ENCODE measurements at regions of chr6 and their contacts with region 1.

Region 1: GRCh38 chr6:77466055-77466450 is 2.8 kb upstream of the HTR1B start:
- DNase-seq: peak; percentile 66 to 84
- ATAC-seq: peak; percentile 76
- H3K4me3 ChIP-seq: peak overlapping the region; percentile 78 to 95
- H3K27ac ChIP-seq: peak overlapping the region; percentile 11 to 90
- H3K4me1 ChIP-seq: no peaks in the 10 kb centered on the region
- H3K27me3 ChIP-seq: no peaks in the 10 kb centered on the region

Region 2: DNA sequence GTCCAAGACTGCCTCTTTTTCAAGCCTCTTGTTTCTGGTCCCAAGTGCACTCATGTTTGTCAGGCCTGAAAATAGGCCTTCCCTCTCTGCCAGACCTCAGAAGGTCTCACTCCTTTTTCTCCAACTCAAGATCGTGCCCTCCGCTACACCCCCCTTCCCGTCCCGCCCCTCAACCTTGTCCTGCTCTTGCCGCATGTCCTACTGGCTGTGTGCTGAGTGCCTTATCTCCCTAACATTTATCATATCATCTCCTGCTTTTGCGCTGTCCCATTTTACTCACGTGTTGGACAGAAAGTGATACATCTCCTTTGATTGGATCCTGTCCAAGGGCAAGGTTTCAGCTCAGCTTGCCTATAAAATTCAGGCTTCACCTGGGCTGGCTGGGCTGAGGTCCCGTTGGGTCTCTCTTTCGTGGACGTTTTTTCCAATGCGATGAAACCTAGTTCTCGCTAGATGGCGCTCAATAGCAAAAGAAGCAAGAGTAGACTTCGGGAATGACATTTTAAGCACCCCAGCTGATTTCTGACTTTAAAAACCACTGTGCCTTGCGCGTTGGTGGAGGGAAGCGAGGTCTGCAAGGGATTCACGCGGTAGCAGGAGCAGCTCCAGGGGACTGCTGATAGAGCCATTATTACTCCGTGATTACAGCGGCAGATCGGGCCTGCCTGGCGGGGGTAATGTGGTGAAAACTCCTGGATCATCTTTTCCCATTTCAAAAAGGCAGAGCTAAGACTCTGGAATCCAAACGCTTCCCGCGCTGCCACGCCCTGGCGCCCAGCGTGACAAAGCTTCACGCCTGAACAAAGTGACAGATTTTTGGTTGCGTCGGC is 1531.2 kb before region 1 on chr6:
- intact Hi-C with region 1: loop called in 1 of 2 experiments (anchors 10 kb)
- DNase-seq: no peak
- ATAC-seq: peak; percentile 74
- H3K4me3 ChIP-seq: peak overlapping the region in 1 of 2 donors; percentile 19
- H3K27ac ChIP-seq: no peak overlapping the region
- H3K4me1 ChIP-seq: no peaks in the 10 kb centered on the region
- H3K27me3 ChIP-seq: no peaks in the 10 kb centered on the region

Region 3: DNA sequence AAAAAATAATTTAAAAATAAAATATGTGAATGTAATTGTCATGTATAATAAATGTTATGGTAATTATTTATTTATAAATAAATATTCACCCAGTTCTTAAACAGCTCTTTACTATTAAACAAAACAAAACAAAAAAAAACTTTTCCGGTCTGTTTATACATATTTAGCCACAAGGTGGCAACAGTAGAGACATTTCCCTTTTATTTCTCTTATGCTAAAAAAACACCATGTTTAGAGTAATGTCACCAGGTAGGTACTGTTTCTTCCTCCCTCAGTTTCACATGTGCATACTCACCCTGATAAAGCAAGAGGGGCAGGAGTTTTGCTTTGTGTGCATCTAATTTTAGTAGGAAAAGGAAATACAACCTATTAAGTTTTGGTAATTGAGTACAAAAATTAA is 783.2 kb before region 1 on chr6:
- intact Hi-C with region 1: loop called (anchors 5 kb)
- DNase-seq: no peak
- ATAC-seq: no peak
- H3K4me3 ChIP-seq: no peak overlapping the region
- H3K27ac ChIP-seq: no peak overlapping the region
- H3K4me1 ChIP-seq: no peaks in the 10 kb centered on the region
- H3K27me3 ChIP-seq: no peaks in the 10 kb centered on the region

Region 4: DNA sequence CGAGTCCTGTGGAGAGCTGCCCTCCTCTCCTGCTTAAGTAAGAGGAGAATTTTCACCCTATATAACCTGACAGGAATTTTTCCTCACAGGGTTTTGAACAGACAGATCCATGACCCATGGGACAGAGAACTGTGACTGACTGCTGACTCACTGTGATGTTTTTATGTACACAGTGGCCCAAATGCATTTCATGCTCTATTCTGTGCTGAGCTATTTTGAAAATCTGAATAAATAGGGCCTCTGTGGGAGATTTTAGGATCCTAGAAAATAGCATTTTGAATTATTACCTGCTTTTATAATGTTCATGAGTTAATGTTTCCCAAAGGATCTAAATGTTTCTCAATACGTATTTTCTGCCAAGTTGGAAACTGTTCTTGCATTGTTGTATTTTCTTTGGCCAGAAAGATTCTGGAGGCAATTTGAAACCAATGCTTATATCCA is 580.2 kb before region 1 on chr6:
- intact Hi-C with region 1: loop called (anchors 10 kb)
- DNase-seq: no peak
- ATAC-seq: peak; percentile 84
- H3K4me3 ChIP-seq: no peak overlapping the region
- H3K27ac ChIP-seq: peak overlapping the region; percentile 66 to 83
- H3K4me1 ChIP-seq: peaks cover 5 to 6% of the 10 kb centered on the region in 2 donors
- H3K27me3 ChIP-seq: no peaks in the 10 kb centered on the region

Region 5: GRCh38 chr6:77038807-77039206 is 427.2 kb before region 1 on chr6:
- intact Hi-C with region 1: no loop called
- DNase-seq: no peak
- ATAC-seq: no peak
- H3K4me3 ChIP-seq: no peak overlapping the region
- H3K27ac ChIP-seq: no peak overlapping the region
- H3K4me1 ChIP-seq: peaks cover 0 to 3% of the 10 kb centered on the region in 2 donors
- H3K27me3 ChIP-seq: no peaks in the 10 kb centered on the region

Region 6: DNA sequence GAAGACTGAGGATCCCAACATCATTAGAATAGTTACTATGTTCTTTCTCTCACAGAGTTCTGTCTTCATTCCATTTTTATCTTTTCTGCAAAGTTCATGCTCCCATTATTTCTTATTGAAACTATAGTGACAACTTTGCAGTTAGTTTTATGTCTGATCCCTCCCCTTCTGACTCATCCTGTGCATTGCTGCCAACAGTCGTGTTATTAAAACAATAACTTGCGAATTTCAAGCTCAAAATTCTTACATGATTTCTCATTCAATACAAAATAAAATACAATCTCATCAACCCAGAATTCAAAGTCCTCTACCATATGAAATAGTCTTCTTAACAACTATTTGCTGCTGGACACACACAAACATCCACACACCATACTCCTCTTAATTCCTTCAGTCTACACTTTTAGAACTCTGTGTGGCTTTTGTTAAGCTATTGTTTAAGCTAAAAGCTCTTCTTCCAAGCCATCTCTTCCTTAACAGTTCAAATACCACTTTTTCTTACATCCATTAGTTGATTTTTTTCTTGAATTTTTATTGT is 1139.9 kb after region 1 on chr6:
- intact Hi-C with region 1: loop called in 1 of 2 experiments (anchors 10 kb)
- DNase-seq: peak in 1 of 2 donors; percentile 55
- ATAC-seq: peak; percentile 50
- H3K4me3 ChIP-seq: no peak overlapping the region
- H3K27ac ChIP-seq: no peak overlapping the region
- H3K4me1 ChIP-seq: peaks cover 0 to 3% of the 10 kb centered on the region in 2 donors
- H3K27me3 ChIP-seq: no peaks in the 10 kb centered on the region

Region 7: DNA sequence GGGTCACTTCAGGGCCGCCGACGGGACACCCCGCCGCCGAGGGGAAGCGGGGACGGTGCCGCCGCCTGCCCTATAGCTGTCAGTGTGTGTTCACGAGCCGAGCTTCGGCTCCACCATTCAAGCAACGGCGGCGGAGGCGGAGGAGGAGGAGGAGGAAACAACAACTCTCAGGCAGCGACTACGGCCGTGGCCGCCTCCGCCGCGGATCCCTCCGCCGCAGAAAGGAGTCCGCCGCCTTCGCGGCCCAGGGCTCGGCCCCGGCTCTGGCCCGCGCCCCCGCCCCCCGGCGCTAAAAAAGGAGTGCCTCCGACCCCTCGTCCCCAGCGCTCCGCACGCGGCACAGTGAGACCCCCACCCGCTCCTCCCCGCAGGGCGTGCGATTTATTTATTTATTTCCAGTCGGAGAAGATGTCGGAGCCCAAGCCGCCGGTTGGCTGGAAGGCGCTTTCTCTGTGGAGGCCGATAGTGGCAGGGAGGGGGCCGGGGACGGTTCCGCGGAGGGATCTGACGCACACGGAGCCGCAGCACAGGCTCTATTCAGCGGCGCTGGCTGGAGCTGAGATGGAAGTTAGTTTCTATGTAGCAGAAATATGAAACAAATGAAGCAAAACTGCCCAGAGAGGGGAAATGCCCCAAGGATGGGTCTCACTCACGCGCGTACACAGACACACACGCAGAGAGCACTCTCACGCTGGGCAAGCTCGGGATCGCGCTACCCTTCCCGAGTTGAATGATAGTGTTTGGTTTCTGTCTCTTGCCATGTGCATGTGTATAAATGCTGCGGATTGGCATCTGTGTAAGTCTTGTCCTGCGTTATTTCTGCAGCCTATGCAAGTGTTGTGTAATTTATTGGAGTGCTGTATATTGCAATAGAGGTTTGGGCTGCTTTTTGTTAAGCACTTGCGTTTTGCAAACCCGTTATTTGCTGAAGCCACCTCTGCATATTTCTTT is 1612.3 kb after region 1 on chr6 and contains the start of gene PHIP:
- intact Hi-C with region 1: loop called in 1 of 2 experiments (anchors 10 kb)
- DNase-seq: peak; percentile 97 to 98
- ATAC-seq: peak; percentile 97
- H3K4me3 ChIP-seq: peak within 1 kb of the TSS; percentile 97 to 100
- H3K27ac ChIP-seq: peak within 1 kb of the TSS; percentile 72 to 87
- H3K4me1 ChIP-seq: no peaks in the 10 kb centered on the region
- H3K27me3 ChIP-seq: no peaks in the 10 kb centered on the region
- total RNA-seq, gene PHIP: 31.5 to 38.0 TPM

Region 8: DNA sequence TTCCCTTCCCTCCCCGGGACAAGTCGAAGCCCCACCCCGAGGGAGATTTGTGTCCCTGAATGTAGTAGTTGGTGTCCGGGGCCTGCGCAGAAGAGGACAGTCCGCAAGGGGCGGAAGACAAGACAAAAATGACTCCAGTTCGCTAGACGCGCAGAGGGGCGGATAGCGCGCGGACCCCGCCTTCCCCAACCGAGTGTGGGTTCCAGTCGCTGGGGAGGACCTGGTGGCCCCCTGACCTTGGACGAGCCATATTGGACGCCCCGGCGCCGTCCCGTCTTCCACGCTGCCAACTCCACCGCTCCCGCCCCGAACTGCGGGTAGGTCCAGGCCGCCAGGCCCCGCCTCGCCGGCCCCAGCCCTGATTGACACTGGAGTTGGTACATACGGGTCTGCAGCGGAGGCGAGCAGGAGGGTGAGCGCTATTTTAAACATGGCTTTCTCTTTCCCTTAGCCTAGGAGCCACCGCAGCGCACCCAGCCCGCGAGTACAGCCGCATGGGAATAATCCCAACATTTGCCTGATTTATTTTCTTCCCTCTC is 1767.6 kb after region 1 on chr6:
- intact Hi-C with region 1: loop called in 1 of 2 experiments (anchors 5 kb)
- DNase-seq: peak; percentile 94 to 96
- ATAC-seq: peak; percentile 95
- H3K4me3 ChIP-seq: peak overlapping the region; percentile 82 to 86
- H3K27ac ChIP-seq: peak overlapping the region; percentile 58 to 78
- H3K4me1 ChIP-seq: no peaks in the 10 kb centered on the region
- H3K27me3 ChIP-seq: no peaks in the 10 kb centered on the region